ENCODE measurements at regions of chr6 and their contacts with region 1.

Region 1: GRCh38 chr6:159941286-159942113 is 27.4 kb upstream of the IGF2R start:
- DNase-seq: no peak
- H3K4me3 ChIP-seq: no peak overlapping the region
- CTCF ChIP-seq: peak; percentile 47

Region 2: GRCh38 chr6:159871906-159872305 is 69.6 kb before region 1 on chr6:
- CTCF ChIA-PET with region 1: interaction called, 240 read pairs
- POLR2A ChIA-PET with region 1: no interaction called
- DNase-seq: no peak
- H3K4me3 ChIP-seq: no peak overlapping the region
- CTCF ChIP-seq: no peak

Region 3: DNA sequence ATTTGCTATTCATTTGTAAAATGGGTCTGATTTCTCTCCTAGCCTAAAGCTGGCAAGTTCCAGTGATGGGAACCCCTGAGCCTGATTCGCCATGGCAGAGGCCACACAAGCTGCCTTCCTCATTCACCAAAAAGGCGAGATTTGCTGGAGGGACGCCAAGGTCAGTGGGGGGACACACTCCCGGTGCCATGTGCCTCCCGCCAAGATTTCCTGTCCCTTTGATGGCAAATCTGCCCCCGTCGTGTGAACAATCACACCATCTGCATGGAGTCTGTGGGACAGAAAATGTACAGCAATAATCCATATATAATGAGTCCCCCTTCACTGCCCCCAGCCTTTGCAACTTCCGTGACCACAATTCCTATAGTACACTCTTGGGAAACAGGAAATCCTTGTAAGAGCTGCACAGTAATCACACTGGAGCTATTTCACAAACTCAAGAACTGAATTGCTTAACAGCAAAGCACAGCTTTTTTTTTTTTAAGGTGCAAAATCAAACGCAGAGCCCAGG is 11.6 kb after region 1 on chr6:
- CTCF ChIA-PET with region 1: interaction called, 26 read pairs
- POLR2A ChIA-PET with region 1: no interaction called
- DNase-seq: peak; percentile 67
- H3K4me3 ChIP-seq: no peak overlapping the region
- CTCF ChIP-seq: no peak

Region 4: DNA sequence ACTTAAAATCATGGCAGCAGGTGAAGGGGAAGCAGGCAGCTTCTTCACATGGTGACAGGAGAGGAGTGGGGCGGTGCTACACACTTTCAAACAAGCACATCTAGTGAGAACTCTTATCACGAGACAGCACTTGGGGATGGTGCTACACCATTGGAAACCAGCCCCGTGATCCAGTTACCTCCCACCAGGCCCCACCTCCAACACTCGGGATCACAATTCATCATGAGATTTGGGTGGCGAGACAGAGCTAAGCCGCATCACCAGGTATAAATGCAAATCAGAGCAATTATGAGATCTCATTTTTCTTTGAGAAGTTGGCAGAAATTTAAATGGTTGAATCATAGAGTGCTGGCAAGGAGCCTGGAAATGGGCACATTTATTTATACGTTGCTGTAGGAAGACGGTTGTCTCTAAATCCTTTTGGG is 58.8 kb after region 1 on chr6:
- CTCF ChIA-PET with region 1: no interaction called
- POLR2A ChIA-PET with region 1: no interaction called
- DNase-seq: no peak
- H3K4me3 ChIP-seq: no peak overlapping the region
- CTCF ChIP-seq: no peak